Esophagus muscularis mucosa (tissue), 4 donors: ENCODE measurements at regions of chr3 and their contacts with region 1.

Region 1: DNA sequence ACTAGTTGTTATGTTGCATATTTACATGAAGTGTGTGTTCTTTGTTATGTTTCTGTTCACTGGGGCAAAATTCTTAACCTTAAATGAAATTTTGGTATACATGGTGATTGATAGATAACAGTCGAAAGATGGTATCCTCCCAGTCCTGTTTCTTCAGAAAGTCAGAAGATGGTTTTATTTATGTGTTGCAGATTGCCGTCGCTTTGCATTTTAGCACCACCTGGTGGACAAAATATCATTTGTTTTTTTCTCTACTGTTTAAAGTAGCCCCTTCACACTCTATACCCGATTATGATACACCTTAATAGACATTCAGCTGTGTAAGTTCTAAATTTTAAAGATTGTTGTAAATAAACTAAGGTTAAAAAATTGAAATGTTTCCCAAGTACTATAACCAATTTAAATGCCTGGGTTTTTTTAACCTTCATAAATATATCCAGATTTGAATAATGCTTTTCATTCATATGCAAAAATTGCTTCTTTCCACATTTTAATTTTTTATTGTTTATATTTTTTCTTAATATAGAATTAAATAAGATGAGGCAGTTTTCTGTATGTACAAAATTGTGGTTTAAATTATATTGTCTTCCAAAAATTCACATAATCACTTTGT is 152.2 kb downstream of the ALCAM start:
- DNase-seq: no peak
- H3K4me3 ChIP-seq: no peak overlapping the region
- H3K27ac ChIP-seq: no peak overlapping the region
- H3K4me1 ChIP-seq: no peaks in the 10 kb centered on the region
- H3K27me3 ChIP-seq: no peaks in the 10 kb centered on the region
- CTCF ChIP-seq: peak; percentile 55 to 64 (median 64)
- EP300 ChIP-seq: no peak
- POLR2A ChIP-seq: no peak

Region 2: GRCh38 chr3:104564045-104564643 is 954.8 kb before region 1 on chr3:
- intact Hi-C with region 1: loop called (anchors 10 kb)
- DNase-seq: no peak
- H3K4me3 ChIP-seq: no peak overlapping the region
- H3K27ac ChIP-seq: no peak overlapping the region
- H3K4me1 ChIP-seq: no peaks in the 10 kb centered on the region
- H3K27me3 ChIP-seq: no peaks in the 10 kb centered on the region
- CTCF ChIP-seq: peak; percentile 39 to 73 (median 57)
- EP300 ChIP-seq: no peak
- POLR2A ChIP-seq: no peak

Region 3: GRCh38 chr3:105366326-105367062 is 152.4 kb before region 1 on chr3 and contains the start of gene ALCAM:
- intact Hi-C with region 1: loop called (anchors 5 kb)
- DNase-seq: peak; percentile 97
- H3K4me3 ChIP-seq: peak within 1 kb of the TSS; percentile 66 to 74 (median 70)
- H3K27ac ChIP-seq: peak within 1 kb of the TSS; percentile 74 to 82 (median 76)
- H3K4me1 ChIP-seq: peaks cover 32 to 44% (median 39%) of the 10 kb centered on the region in 4 donors
- H3K27me3 ChIP-seq: no peaks in the 10 kb centered on the region
- CTCF ChIP-seq: peak; percentile 62 to 66 (median 63)
- EP300 ChIP-seq: no peak
- POLR2A ChIP-seq: no peak
- total RNA-seq, gene ALCAM: 19.0 to 26.2 (median 22.6) TPM

Region 4: DNA sequence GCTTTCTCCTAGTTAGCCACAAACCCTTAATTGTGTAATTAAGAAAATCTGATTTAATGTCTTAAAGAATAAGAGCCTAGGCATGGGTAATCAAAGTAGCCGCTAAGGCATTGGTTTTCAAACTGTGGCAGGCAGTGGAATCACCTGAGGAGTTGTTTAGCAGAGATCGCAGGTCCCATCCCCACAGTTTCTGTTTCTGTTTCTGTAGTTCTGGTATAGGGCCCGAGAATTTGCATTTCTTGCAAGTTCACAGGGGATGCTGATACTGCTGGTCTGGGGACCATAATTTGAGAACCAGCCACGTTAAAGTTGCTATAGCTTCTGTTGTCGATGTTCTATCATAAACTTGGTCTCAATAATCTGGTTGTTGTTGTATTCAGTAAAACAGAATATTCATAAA is 52.1 kb after region 1 on chr3:
- intact Hi-C with region 1: no loop called
- DNase-seq: no peak
- H3K4me3 ChIP-seq: no peak overlapping the region
- H3K27ac ChIP-seq: no peak overlapping the region
- H3K4me1 ChIP-seq: no peaks in the 10 kb centered on the region
- H3K27me3 ChIP-seq: no peaks in the 10 kb centered on the region
- CTCF ChIP-seq: no peak
- EP300 ChIP-seq: no peak
- POLR2A ChIP-seq: no peak

Region 5: GRCh38 chr3:106004137-106004681 is 485.3 kb after region 1 on chr3:
- intact Hi-C with region 1: no loop called
- DNase-seq: no peak
- H3K4me3 ChIP-seq: peak overlapping the region in 3 of 4 donors; percentile 1 to 24 (median 14)
- H3K27ac ChIP-seq: no peak overlapping the region
- H3K4me1 ChIP-seq: no peaks in the 10 kb centered on the region
- H3K27me3 ChIP-seq: no peaks in the 10 kb centered on the region
- CTCF ChIP-seq: no peak
- EP300 ChIP-seq: no peak
- POLR2A ChIP-seq: no peak